ENCODE measurements at regions of chr12 and their contacts with region 1.

Region 1: GRCh38 chr12:132562489-132563021 is 47.8 kb downstream of the LRCOL1 start:
- DNase-seq: no peak

Region 2: DNA sequence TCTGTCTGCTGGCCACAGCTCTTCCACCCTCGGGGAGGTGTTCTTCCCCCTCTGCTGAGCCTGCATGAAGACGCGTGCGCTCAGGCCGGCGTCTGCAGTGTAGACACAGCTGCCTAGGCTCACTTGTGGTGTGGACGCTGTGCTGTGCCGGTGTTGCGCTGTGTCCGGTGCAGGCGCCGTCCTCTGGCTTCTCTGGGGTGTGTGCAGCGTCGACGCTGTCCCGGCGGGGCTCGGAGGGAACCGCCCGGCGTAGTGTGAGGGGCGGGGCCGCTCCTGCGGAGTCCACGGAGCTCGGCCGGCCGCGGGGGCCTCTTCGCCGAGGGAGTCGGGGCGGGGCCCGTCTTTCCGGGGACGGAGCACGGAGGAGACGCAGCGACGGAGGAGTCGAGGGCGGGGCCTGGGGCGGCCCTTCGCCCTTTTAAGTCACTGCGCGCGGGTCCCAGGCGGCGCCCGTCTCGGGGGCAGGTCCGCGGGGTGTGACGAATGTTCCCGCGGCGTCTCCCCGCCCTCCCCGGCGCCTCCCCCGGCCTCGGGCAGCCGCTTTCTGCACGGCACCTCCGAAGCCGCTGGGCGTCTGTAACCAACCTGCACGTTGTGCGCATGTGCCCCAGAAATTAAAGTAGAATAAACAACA is 373.1 kb before region 1 on chr12:
- intact Hi-C with region 1: no loop called
- DNase-seq: peak; percentile 97

Region 3: GRCh38 chr12:132502149-132502877 is 60.2 kb before region 1 on chr12:
- intact Hi-C with region 1: no loop called
- DNase-seq: no peak

Region 4: DNA sequence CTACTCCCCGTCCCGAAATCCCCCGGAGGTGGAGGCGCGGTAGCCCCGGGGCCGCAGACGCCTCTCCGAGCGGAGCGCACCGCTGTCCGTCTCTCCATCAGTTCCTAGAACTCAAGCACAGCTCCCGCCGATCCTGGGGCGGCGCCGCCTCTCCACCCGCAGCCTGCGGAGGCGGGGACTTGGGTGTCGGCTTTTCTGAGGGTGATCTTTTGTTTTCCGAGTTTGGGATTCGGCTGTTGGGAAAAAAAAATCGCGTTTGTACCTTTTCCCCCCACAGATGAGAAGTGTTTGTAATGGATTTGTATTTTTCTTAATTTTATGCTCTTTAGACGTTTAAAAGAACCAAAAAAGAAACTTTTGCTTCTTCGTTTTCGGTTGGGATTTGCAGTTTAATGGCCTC is 21.2 kb after region 1 on chr12:
- intact Hi-C with region 1: loop called in 1 of 2 experiments (anchors 1 kb)
- DNase-seq: no peak